ENCODE measurements at regions of chr2 and their contacts with region 1.

Region 1: DNA sequence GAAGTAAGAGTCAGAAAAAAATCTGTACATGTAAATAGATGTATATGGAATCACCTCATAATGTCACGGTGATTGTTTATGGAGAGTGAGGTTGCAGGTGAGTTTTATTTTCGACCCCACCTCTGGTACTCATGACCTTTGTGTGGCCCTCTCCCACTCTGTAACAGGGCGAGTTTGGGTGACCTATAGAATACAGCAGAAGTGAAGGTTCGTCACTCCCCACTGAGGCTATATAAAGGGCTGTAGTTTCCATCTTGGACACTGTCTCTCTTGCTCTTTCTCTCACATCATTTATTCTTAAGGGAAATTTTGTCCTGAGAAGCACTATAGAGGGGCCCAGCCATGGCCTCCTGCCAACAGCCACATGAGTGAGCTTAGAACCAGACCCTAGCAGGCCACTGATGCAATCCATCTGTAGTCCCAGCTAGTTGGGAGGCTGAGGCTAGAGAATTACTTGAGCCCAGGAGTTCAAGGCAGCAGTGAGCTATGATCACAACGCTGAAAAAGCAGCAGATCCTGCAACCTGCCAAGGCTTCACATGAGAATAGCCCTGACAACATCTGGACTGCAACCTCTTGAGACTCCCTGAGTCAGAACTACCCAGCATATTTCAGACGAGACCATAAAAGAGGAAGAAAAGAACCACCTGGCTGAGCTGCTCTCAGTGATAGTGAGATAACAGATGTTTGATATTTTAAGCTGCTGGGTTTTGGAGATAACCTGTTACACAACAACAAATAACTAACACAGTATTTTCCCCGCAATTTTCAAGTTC is 74.3 kb upstream of the SLC1A4 start:
- DNase-seq: no peak
- H3K4me3 Mint-ChIP-seq: no peak overlapping the region
- H3K27ac Mint-ChIP-seq: no peak overlapping the region
- H3K4me1 Mint-ChIP-seq: no peaks in the 10 kb centered on the region
- H3K27me3 Mint-ChIP-seq: no peaks in the 10 kb centered on the region
- CTCF ChIP-seq: no peak

Region 2: DNA sequence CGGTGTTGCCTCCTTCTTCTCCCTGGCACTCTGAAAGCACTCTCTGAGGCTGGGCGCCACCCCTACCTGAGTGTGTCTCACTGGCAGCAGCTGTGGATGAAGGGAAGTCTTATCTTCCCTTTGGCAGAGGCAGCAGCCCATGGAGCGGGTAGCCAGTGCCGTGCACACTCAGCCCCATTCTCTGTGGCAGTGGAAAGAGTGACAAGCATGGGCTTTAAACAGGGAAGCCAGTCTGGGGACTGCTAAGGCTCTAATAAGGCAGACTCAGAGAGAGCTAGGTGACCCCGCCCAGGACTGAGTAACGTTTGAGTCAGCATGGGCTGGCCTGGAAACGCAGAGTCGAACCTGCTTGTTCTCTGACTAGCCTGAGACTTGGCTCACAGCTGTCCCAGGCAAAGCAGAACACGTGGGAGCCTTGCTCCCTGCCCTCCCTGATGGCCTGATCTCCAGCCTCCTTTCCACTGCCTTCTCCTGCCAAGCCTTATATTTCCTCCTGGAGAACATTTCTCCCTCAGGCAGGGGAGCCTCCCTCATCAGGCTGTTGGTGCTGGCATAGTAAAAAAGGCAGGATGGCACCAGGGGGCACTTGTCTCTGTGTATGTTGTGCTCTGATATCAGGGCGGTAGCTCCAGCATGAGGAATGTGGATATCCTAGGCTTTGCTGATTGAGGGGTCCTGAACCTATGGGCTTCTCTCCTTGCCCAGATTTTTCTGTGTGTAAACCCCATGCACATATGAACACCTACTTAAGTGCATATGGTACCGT is 554.8 kb before region 1 on chr2:
- CTCF ChIA-PET with region 1: no interaction called
- intact Hi-C with region 1: no loop called
- DNase-seq: peak; percentile 86
- H3K4me3 Mint-ChIP-seq: peak overlapping the region; percentile 64
- H3K27ac Mint-ChIP-seq: peak overlapping the region; percentile 94
- H3K4me1 Mint-ChIP-seq: peaks cover 45% of the 10 kb centered on the region
- H3K27me3 Mint-ChIP-seq: peaks cover 14% of the 10 kb centered on the region
- CTCF ChIP-seq: no peak

Region 3: GRCh38 chr2:64482765-64483504 is 432.0 kb before region 1 on chr2:
- CTCF ChIA-PET with region 1: interaction called, 11 read pairs
- intact Hi-C with region 1: no loop called
- DNase-seq: peak; percentile 40
- H3K4me3 Mint-ChIP-seq: no peak overlapping the region
- H3K27ac Mint-ChIP-seq: no peak overlapping the region
- H3K4me1 Mint-ChIP-seq: no peaks in the 10 kb centered on the region
- H3K27me3 Mint-ChIP-seq: peaks cover 26% of the 10 kb centered on the region
- CTCF ChIP-seq: no peak

Region 4: DNA sequence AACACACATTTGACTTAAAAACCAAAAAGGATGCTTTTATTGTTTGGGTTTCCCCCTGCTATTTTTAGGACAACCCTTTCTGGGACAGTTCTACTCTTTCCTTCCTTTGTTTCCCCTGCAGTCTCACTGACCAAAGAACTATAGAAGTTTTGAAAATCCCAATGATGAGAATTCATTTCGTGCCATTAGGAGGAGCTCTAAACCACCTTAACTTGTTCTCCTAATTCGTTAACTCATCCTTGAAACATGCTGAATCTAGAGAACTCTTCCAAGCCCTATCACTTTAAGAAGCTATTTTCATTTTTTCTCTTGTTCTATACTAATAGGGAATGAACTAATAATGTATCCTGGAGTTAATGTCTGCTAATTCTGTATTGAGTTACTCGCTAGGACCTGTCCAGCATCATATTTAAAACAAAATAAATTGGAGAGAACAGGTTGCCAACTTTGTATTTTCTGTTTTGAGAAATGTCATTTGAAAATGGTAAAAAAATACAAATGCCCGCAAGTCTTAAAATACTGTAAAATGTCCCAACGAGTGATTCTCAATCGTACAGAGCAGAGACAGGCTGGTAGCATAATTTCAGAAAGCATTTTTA is 327.9 kb before region 1 on chr2:
- CTCF ChIA-PET with region 1: interaction called, 4 read pairs
- intact Hi-C with region 1: loop called (anchors 1 kb)
- DNase-seq: no peak
- H3K4me3 Mint-ChIP-seq: no peak overlapping the region
- H3K27ac Mint-ChIP-seq: no peak overlapping the region
- H3K4me1 Mint-ChIP-seq: no peaks in the 10 kb centered on the region
- H3K27me3 Mint-ChIP-seq: no peaks in the 10 kb centered on the region
- CTCF ChIP-seq: peak; percentile 39

Region 5: GRCh38 chr2:65040400-65041261 is 125.7 kb after region 1 on chr2:
- CTCF ChIA-PET with region 1: interaction called, 5 read pairs
- intact Hi-C with region 1: loop called (anchors 2 kb)
- DNase-seq: peak; percentile 79
- H3K4me3 Mint-ChIP-seq: no peak overlapping the region
- H3K27ac Mint-ChIP-seq: no peak overlapping the region
- H3K4me1 Mint-ChIP-seq: peaks cover 7% of the 10 kb centered on the region
- H3K27me3 Mint-ChIP-seq: no peaks in the 10 kb centered on the region
- CTCF ChIP-seq: peak; percentile 93

Region 6: DNA sequence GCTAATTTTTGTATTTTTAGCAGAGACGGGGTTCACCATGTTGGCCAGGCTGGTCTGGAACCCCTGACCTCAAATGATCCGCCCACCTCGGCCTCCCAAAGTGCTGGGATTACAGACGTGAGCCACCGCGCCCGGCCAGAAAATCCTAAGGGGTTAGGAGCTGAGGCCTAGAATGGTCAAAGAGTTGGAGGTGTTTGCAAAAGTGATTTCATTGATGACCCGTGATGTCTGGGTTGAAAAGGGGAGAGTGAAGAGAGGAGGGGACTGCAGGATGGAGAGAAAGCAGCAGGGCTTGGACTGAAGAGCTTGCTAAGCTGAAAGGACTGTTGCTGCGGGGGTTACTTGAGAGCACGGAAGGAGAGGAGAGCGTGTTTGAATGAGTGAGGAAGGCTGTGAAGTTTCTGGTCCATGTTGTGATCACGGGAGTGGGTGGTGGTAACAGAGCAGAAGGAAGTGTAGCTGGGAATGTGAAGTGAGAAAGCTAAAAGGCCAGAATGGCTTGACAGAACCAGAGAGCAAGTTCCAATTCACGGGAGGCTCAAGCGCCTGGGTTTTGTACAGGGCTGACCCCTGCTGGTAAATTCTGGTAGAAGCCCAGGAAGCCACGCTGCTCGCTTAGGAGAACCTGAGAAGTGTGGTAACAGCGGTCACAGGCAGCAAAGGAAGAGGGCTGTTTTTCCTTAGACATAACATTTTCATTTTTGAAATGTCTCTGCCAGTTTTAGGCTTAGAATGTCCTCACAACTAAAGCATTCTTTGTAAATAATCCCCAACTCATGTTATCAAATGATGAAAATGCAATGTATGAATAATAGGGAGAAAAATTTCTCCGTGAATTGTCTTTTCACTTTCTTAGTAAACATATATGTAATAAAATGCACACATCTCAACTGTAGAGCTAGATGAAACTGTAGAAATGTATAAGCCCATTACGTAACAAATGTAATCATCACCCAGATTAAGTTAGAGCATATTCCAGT is 272.2 kb after region 1 on chr2:
- CTCF ChIA-PET with region 1: interaction called, 7 read pairs
- intact Hi-C with region 1: loop called (anchors 5 kb)
- DNase-seq: peak; percentile 84
- H3K4me3 Mint-ChIP-seq: peak overlapping the region; percentile 13
- H3K27ac Mint-ChIP-seq: no peak overlapping the region
- H3K4me1 Mint-ChIP-seq: peaks cover 16% of the 10 kb centered on the region
- H3K27me3 Mint-ChIP-seq: no peaks in the 10 kb centered on the region
- CTCF ChIP-seq: peak; percentile 70

Region 7: GRCh38 chr2:65576861-65577601 is 662.1 kb after region 1 on chr2:
- CTCF ChIA-PET with region 1: no interaction called
- intact Hi-C with region 1: loop called (anchors 5 kb)
- DNase-seq: peak; percentile 14
- H3K4me3 Mint-ChIP-seq: peak overlapping the region; percentile 24
- H3K27ac Mint-ChIP-seq: peak overlapping the region; percentile 89
- H3K4me1 Mint-ChIP-seq: peaks cover 41% of the 10 kb centered on the region
- H3K27me3 Mint-ChIP-seq: no peaks in the 10 kb centered on the region
- CTCF ChIP-seq: no peak

Measured in Calu3 (cell line).